ENCODE measurements at regions of chr13 and their contacts with region 1.

Region 1: GRCh38 chr13:74133657-74134201 is 475 bp downstream of the KLF12 start:
- DNase-seq: peak; percentile 81 to 98 (median 91)
- ATAC-seq: peak; percentile 62
- H3K4me3 ChIP-seq: peak overlapping the region; percentile 80 to 95
- H3K4me3 Mint-ChIP-seq: peak overlapping the region; percentile 95
- H3K27ac ChIP-seq: peak overlapping the region; percentile 82 to 98
- H3K27ac Mint-ChIP-seq: peak overlapping the region; percentile 99
- H3K4me1 ChIP-seq: peaks cover 32% of the 10 kb centered on the region
- H3K4me1 Mint-ChIP-seq: peaks cover 34% of the 10 kb centered on the region
- H3K27me3 ChIP-seq: no peaks in the 10 kb centered on the region
- H3K27me3 Mint-ChIP-seq: no peaks in the 10 kb centered on the region
- CTCF ChIP-seq: no peak

Region 2: GRCh38 chr13:73058736-73059459 is 1074.8 kb before region 1 on chr13 and contains the start of gene KLF5:
- CTCF ChIA-PET with region 1: no interaction called
- POLR2A ChIA-PET with region 1: no interaction called
- intact Hi-C with region 1: loop called in 1 of 2 experiments (anchors 10 kb)
- DNase-seq: peak; percentile 85 to 96 (median 93)
- ATAC-seq: peak; percentile 95
- H3K4me3 ChIP-seq: peak within 1 kb of the TSS; percentile 53 to 54
- H3K4me3 Mint-ChIP-seq: peak within 1 kb of the TSS; percentile 93
- H3K27ac ChIP-seq: no peak within 1 kb of the TSS
- H3K27ac Mint-ChIP-seq: peak within 1 kb of the TSS; percentile 72
- H3K4me1 ChIP-seq: peaks cover 14% of the 10 kb centered on the region
- H3K4me1 Mint-ChIP-seq: peaks cover 21% of the 10 kb centered on the region
- H3K27me3 ChIP-seq: peaks cover 11 to 12% of the 10 kb centered on the region in 2 experiments
- H3K27me3 Mint-ChIP-seq: peaks cover 40% of the 10 kb centered on the region
- CTCF ChIP-seq: no peak
- total RNA-seq, gene KLF5: 3.4 to 3.7 TPM

Region 3: GRCh38 chr13:73894995-73895571 is 238.6 kb before region 1 on chr13:
- CTCF ChIA-PET with region 1: no interaction called
- POLR2A ChIA-PET with region 1: no interaction called
- intact Hi-C with region 1: no loop called
- DNase-seq: peak in 1 of 9 experiments; percentile 15
- ATAC-seq: no peak
- H3K4me3 ChIP-seq: no peak overlapping the region
- H3K4me3 Mint-ChIP-seq: no peak overlapping the region
- H3K27ac ChIP-seq: no peak overlapping the region
- H3K27ac Mint-ChIP-seq: peak overlapping the region; percentile 20
- H3K4me1 ChIP-seq: no peaks in the 10 kb centered on the region
- H3K4me1 Mint-ChIP-seq: peaks cover 54% of the 10 kb centered on the region
- H3K27me3 ChIP-seq: no peaks in the 10 kb centered on the region
- H3K27me3 Mint-ChIP-seq: no peaks in the 10 kb centered on the region
- CTCF ChIP-seq: no peak

Region 4: GRCh38 chr13:73943137-73943964 is 190.4 kb before region 1 on chr13:
- CTCF ChIA-PET with region 1: no interaction called
- POLR2A ChIA-PET with region 1: interaction called, 3 read pairs
- intact Hi-C with region 1: loop called (anchors 2 to 5 kb)
- DNase-seq: peak in 2 of 9 experiments; percentile 57 to 78
- ATAC-seq: peak; percentile 93
- H3K4me3 ChIP-seq: no peak overlapping the region
- H3K4me3 Mint-ChIP-seq: peak overlapping the region; percentile 16
- H3K27ac ChIP-seq: peak overlapping the region; percentile 37 to 75
- H3K27ac Mint-ChIP-seq: peak overlapping the region; percentile 93
- H3K4me1 ChIP-seq: peaks cover 53% of the 10 kb centered on the region
- H3K4me1 Mint-ChIP-seq: peaks cover 80% of the 10 kb centered on the region
- H3K27me3 ChIP-seq: no peaks in the 10 kb centered on the region
- H3K27me3 Mint-ChIP-seq: no peaks in the 10 kb centered on the region
- CTCF ChIP-seq: no peak

Region 5: DNA sequence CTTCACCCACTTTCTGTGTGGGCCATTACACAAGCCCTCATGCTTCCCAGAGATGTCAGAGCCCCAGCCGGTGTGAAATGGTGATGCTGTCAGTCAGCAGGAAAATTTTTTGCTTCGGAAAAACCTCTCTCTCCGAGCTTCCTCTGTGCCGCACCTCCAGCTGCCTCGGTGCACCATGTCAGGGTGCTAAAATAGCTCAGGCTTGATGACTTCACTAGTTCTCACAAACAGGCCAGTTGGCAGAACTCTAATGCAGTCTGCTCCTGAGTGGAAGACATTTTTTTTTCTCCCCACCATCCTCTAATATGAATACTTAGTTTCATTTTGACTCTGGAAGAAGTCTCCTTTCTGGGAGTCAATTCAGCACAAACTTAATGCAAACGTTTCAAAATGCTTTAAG is 70.8 kb before region 1 on chr13:
- CTCF ChIA-PET with region 1: interaction called, 3 read pairs
- POLR2A ChIA-PET with region 1: interaction called, 6 read pairs
- intact Hi-C with region 1: loop called (anchors 2 to 5 kb)
- DNase-seq: peak in 5 of 9 experiments; percentile 10 to 66 (median 30)
- ATAC-seq: peak; percentile 16
- H3K4me3 ChIP-seq: no peak overlapping the region
- H3K4me3 Mint-ChIP-seq: peak overlapping the region; percentile 30
- H3K27ac ChIP-seq: peak overlapping the region in 1 of 2 experiments; percentile 76
- H3K27ac Mint-ChIP-seq: peak overlapping the region; percentile 81
- H3K4me1 ChIP-seq: peaks cover 55% of the 10 kb centered on the region
- H3K4me1 Mint-ChIP-seq: peaks cover 85% of the 10 kb centered on the region
- H3K27me3 ChIP-seq: no peaks in the 10 kb centered on the region
- H3K27me3 Mint-ChIP-seq: no peaks in the 10 kb centered on the region
- CTCF ChIP-seq: no peak

Region 6: GRCh38 chr13:74148352-74148751 is 14.6 kb after region 1 on chr13:
- CTCF ChIA-PET with region 1: no interaction called
- POLR2A ChIA-PET with region 1: interaction called, 3 read pairs
- intact Hi-C with region 1: loop called in 1 of 2 experiments (anchors 2 kb)
- DNase-seq: no peak
- ATAC-seq: no peak
- H3K4me3 ChIP-seq: no peak overlapping the region
- H3K4me3 Mint-ChIP-seq: no peak overlapping the region
- H3K27ac ChIP-seq: no peak overlapping the region
- H3K27ac Mint-ChIP-seq: no peak overlapping the region
- H3K4me1 ChIP-seq: no peaks in the 10 kb centered on the region
- H3K4me1 Mint-ChIP-seq: no peaks in the 10 kb centered on the region
- H3K27me3 ChIP-seq: no peaks in the 10 kb centered on the region
- H3K27me3 Mint-ChIP-seq: no peaks in the 10 kb centered on the region
- CTCF ChIP-seq: no peak

Region 7: DNA sequence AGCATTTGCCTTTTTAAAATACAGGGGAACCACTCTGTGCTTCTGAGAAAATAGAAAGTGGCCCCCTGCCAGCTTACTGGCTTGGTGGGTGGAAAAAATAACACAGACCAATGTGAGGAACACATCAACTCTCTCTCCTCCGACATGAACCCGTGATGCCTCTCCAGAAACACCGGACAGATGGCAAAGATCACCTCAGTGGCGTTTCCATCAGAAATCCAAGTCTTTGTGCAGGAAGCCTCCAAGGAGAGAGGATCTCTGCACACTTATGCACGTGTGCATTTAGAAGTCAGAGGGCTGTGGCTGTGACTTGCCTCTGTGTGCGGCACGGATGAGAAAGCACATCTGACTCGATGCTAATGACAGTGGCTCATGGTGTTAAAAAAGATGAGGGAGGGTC is 112.8 kb after region 1 on chr13:
- CTCF ChIA-PET with region 1: interaction called, 3 read pairs
- POLR2A ChIA-PET with region 1: interaction called, 7 read pairs
- intact Hi-C with region 1: loop called in 1 of 2 experiments (anchors 5 kb)
- DNase-seq: peak in 6 of 9 experiments; percentile 14 to 51 (median 32)
- ATAC-seq: no peak
- H3K4me3 ChIP-seq: peak overlapping the region; percentile 6 to 12
- H3K4me3 Mint-ChIP-seq: peak overlapping the region; percentile 67
- H3K27ac ChIP-seq: peak overlapping the region; percentile 37 to 82
- H3K27ac Mint-ChIP-seq: peak overlapping the region; percentile 98
- H3K4me1 ChIP-seq: peaks cover 85% of the 10 kb centered on the region
- H3K4me1 Mint-ChIP-seq: peaks cover 94% of the 10 kb centered on the region
- H3K27me3 ChIP-seq: no peaks in the 10 kb centered on the region
- H3K27me3 Mint-ChIP-seq: no peaks in the 10 kb centered on the region
- CTCF ChIP-seq: no peak

Region 8: GRCh38 chr13:74367193-74367592 is 233.5 kb after region 1 on chr13:
- CTCF ChIA-PET with region 1: no interaction called
- POLR2A ChIA-PET with region 1: no interaction called
- intact Hi-C with region 1: no loop called
- DNase-seq: peak in 1 of 9 experiments; percentile 5
- ATAC-seq: no peak
- H3K4me3 ChIP-seq: no peak overlapping the region
- H3K4me3 Mint-ChIP-seq: no peak overlapping the region
- H3K27ac ChIP-seq: no peak overlapping the region
- H3K27ac Mint-ChIP-seq: no peak overlapping the region
- H3K4me1 ChIP-seq: no peaks in the 10 kb centered on the region
- H3K4me1 Mint-ChIP-seq: no peaks in the 10 kb centered on the region
- H3K27me3 ChIP-seq: no peaks in the 10 kb centered on the region
- H3K27me3 Mint-ChIP-seq: no peaks in the 10 kb centered on the region
- CTCF ChIP-seq: no peak